ENCODE measurements at regions of chr5 and their contacts with region 1.

Region 1: DNA sequence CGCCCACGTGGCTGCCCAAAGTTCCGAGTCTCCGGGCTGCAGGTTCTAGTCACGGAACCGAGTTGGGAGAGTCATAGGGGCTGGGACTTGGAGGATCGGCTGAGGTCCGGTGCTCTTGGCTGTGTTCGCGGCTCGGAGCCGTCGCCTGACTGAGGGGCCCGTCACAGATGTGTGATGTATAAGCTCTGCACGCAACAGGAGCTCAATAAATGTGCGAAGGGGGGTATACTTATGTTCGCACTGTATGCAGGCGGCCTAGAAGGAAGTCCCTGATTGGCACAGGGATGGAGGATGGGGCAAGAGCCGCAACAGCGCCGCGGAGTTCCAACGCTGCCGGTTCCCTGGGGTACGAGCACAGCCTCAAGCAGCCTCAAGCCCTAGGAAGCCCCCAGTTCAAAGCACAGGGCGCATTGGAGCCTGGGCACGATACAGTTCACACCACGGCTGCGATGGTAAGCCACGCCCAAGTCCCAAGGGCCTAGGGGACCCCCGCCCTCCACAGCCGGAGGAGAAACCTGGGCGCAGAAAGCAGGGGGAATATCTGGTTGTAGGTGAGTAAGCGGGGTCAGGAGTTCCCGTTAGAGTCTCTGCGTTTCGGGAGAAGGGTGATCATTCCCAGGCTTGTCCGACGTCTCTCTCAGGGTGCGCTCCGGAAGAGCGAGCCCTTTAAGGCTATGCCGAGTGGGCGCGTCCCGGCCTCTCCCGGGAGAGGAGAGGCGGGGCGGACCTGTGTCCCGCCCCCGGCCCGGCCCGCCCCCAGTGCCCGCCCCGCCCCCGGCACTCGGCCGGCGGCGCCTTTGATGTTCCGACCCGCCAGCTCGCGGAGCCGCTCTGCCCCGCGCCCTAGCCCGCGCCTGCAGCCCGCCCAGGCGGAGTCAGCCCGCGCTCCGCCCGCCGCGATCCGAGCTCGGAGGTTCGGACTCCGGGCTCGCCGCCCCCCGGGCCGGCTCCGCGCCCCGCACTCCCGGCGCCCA is at the start of gene TCF7:
- DNase-seq: peak; percentile 88
- ATAC-seq: peak; percentile 40
- H3K4me3 Mint-ChIP-seq: peak within 1 kb of the TSS; percentile 85
- H3K27ac Mint-ChIP-seq: peak within 1 kb of the TSS; percentile 97
- H3K4me1 Mint-ChIP-seq: peaks cover 61% of the 10 kb centered on the region
- H3K27me3 Mint-ChIP-seq: no peaks in the 10 kb centered on the region
- total RNA-seq, gene TCF7: 94.8 to 117 TPM

Region 2: GRCh38 chr5:134004592-134005375 is 109.4 kb before region 1 on chr5 and contains the start of gene VDAC1:
- CTCF ChIA-PET with region 1: no interaction called
- POLR2A ChIA-PET with region 1: interaction called, 3 read pairs
- intact Hi-C with region 1: loop called in 1 of 2 experiments (anchors 1 kb)
- DNase-seq: peak; percentile 92
- ATAC-seq: peak; percentile 85
- H3K4me3 Mint-ChIP-seq: peak within 1 kb of the TSS; percentile 94
- H3K27ac Mint-ChIP-seq: peak within 1 kb of the TSS; percentile 98
- H3K4me1 Mint-ChIP-seq: peaks cover 44% of the 10 kb centered on the region
- H3K27me3 Mint-ChIP-seq: no peaks in the 10 kb centered on the region
- total RNA-seq, gene VDAC1: 482 to 486 TPM

Region 3: DNA sequence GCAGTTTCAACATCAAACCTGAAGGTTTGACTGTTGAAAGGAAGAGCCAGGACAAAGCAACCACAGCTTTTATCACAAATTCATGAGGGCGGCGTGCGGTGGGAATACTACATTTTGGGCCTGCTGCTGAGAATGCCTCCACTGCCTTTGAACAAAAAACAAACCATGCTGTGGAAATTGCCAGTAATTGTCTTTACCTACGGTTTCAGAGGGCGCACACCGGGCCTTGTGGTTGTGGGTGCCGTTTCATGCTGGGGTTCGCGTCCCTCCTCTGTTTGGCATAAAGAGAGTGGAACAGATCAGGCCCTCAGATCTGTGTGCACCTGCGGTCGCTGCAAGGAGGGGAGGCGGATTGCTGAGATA is 27.3 kb before region 1 on chr5:
- CTCF ChIA-PET with region 1: interaction called, 5 read pairs
- POLR2A ChIA-PET with region 1: interaction called, 4 read pairs
- intact Hi-C with region 1: loop called (anchors 1 to 2 kb)
- DNase-seq: peak; percentile 90
- ATAC-seq: peak; percentile 87
- H3K4me3 Mint-ChIP-seq: peak overlapping the region; percentile 46
- H3K27ac Mint-ChIP-seq: peak overlapping the region; percentile 93
- H3K4me1 Mint-ChIP-seq: peaks cover 84% of the 10 kb centered on the region
- H3K27me3 Mint-ChIP-seq: peaks cover 1% of the 10 kb centered on the region

Region 4: DNA sequence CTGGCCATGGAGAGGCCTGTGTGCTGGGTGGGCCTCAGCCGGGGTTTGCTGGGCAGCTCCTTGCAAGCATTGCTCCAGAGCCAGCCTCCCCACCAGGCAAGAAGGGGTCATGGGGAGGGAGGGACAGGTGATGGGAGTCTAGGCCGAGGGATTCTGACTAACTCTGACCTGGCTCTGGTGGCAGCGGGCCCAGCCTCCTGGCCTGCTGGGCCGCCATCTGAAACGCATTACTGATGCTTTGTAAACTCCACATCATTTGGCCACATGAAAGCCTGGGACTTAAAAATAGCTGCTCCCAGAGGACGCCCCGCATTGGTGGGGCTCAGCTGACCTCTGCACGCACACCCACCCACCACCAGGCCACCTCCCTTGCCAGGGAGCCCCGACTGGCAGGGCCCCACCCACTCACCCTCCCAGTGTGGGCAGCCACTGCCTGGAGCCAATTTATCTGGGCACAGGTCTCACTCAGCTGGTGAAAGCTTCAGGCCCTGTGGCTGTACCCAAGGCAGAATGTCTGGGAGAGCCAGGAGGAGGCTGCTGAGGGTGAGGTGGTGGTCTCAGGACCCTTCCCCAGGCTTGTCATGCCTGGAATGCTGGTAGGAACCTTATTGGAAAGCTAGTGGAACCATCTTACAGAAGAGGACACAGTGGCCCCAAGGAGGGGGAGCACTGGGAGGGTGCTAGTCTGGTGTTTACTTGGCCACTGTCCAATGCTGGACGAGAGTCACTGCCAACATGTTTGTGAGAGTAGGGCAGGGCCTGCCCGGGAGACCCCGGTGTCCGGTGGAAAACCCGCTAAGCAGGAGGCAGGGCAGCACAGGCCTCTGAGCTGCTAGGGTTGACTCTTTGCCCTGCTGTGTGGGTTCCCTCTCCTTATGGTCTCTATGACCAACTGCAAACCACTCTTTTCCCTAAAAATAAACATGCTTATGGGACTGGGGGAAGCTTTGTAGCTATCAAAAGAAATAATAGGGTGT is 11.1 kb after region 1 on chr5:
- CTCF ChIA-PET with region 1: interaction called, 92 read pairs
- POLR2A ChIA-PET with region 1: interaction called, 9 read pairs
- intact Hi-C with region 1: loop called (anchors 1 kb)
- DNase-seq: peak; percentile 54
- ATAC-seq: no peak
- H3K4me3 Mint-ChIP-seq: peak overlapping the region; percentile 52
- H3K27ac Mint-ChIP-seq: peak overlapping the region; percentile 91
- H3K4me1 Mint-ChIP-seq: peaks cover 100% of the 10 kb centered on the region
- H3K27me3 Mint-ChIP-seq: no peaks in the 10 kb centered on the region

Region 5: GRCh38 chr5:134140530-134141201 is 26.5 kb after region 1 on chr5:
- CTCF ChIA-PET with region 1: interaction called, 37 read pairs
- POLR2A ChIA-PET with region 1: interaction called, 16 read pairs
- intact Hi-C with region 1: loop called (anchors 1 kb)
- DNase-seq: peak; percentile 82
- ATAC-seq: peak; percentile 42
- H3K4me3 Mint-ChIP-seq: no peak overlapping the region
- H3K27ac Mint-ChIP-seq: no peak overlapping the region
- H3K4me1 Mint-ChIP-seq: peaks cover 69% of the 10 kb centered on the region
- H3K27me3 Mint-ChIP-seq: no peaks in the 10 kb centered on the region

Measured in activated CD4-positive, alpha-beta T cell treated with anti-CD3 and anti-CD28 coated beads for 36 hours (primary cell).